Calu3 (cell line): ENCODE measurements at regions of chr1 and their contacts with region 1.

Region 1: DNA sequence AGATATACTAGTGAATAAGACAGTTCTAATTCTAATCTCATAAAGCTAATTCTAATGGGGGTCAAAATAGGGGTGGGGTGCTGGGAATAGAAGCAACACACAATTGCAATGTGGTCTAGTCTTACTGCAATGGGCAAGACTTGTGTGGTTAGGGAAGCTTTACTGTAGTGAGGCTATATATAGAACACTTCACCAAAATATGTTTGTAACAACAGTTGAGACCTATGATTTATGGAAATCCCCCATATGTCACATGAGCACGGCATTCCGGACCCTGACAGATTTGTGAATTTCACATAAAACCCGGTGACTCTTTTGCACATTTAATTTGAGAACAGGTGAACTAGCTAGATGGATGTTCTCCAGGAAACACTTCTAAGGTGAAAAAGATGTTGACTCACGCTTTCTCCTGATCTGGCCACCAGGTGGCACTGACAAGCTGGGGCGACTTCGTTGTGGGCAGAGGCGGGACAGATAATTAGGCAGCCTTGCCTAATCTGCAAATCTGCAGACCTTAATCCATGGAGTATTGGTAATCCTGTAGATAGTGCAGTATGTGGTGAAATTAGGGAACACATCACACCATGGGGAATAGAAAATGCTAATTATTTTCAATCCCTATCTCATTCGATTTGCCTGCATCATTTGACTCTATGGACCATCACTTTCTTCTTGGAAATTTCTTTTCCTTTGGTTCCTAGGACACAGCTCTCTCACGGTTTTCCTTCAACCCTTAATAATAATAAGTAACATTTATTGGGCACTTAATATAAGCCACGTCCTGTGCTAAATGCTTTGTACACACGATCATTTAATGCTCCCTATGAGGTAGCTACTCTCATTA is 37.7 kb downstream of the KIAA0040 start:
- DNase-seq: peak; percentile 85
- H3K4me3 Mint-ChIP-seq: no peak overlapping the region
- H3K27ac Mint-ChIP-seq: no peak overlapping the region
- H3K4me1 Mint-ChIP-seq: peaks cover 21% of the 10 kb centered on the region
- H3K27me3 Mint-ChIP-seq: peaks cover 45% of the 10 kb centered on the region
- CTCF ChIP-seq: peak; percentile 85

Region 2: GRCh38 chr1:175023043-175023921 is 131.6 kb before region 1 on chr1 and contains the start of gene MRPS14:
- CTCF ChIA-PET with region 1: interaction called, 6 read pairs
- intact Hi-C with region 1: loop called (anchors 2 kb)
- DNase-seq: peak; percentile 99
- H3K4me3 Mint-ChIP-seq: peak within 1 kb of the TSS; percentile 77
- H3K27ac Mint-ChIP-seq: peak within 1 kb of the TSS; percentile 63
- H3K4me1 Mint-ChIP-seq: peaks cover 15% of the 10 kb centered on the region
- H3K27me3 Mint-ChIP-seq: no peaks in the 10 kb centered on the region
- CTCF ChIP-seq: no peak
- total RNA-seq, gene MRPS14: 29.9 and 33.6 TPM in 2 replicates

Region 3: DNA sequence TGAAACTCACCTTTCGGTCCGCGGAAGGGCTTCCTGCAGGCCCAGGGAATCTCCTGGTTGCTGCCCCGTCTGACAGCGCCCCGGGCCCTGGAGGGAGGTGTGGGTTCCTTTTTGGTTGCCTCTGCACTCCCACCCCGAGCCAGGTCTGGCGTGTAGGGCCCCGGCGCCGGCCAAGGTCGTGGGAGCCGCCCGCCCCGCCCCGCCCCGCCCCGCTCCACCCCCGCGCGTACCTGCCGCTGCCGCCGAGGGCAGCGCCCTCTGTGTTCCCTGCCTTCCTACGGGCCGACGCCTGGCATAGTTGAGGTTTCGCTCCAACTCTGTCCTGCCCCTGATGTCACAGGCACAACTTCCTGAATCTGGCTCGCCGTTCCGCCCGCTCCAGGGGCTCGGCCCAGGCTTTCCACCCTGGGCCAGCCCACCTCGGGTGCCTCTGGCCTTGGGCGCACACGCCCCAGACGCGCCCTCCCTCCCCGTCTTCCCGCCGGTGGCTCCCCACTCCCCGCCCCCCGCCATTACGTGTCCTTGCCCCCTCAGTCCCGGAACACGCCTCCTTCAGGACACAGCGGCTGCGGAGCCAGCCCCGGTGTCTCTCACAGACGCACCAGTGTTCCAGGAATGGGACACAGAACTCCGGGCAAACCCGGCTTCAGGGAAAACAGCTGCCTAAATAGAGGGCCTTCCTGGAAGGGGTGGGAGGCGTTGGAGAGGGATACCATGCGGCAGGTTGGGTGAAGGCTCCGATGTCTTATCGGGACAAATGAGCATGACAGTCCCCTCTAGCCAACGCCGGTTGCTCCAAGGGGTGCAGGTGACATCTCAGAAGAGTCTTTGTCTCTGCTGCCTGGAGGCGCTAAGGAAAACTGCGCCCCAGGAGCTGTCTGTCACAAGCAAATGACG is 38.0 kb after region 1 on chr1 and contains the start of gene KIAA0040:
- CTCF ChIA-PET with region 1: interaction called, 14 read pairs
- intact Hi-C with region 1: loop called (anchors 1 kb)
- DNase-seq: peak; percentile 87
- H3K4me3 Mint-ChIP-seq: peak within 1 kb of the TSS; percentile 86
- H3K27ac Mint-ChIP-seq: peak within 1 kb of the TSS; percentile 89
- H3K4me1 Mint-ChIP-seq: peaks cover 49% of the 10 kb centered on the region
- H3K27me3 Mint-ChIP-seq: no peaks in the 10 kb centered on the region
- CTCF ChIP-seq: peak; percentile 13
- total RNA-seq, gene KIAA0040: 24.3 and 33.4 TPM in 2 replicates

Region 4: DNA sequence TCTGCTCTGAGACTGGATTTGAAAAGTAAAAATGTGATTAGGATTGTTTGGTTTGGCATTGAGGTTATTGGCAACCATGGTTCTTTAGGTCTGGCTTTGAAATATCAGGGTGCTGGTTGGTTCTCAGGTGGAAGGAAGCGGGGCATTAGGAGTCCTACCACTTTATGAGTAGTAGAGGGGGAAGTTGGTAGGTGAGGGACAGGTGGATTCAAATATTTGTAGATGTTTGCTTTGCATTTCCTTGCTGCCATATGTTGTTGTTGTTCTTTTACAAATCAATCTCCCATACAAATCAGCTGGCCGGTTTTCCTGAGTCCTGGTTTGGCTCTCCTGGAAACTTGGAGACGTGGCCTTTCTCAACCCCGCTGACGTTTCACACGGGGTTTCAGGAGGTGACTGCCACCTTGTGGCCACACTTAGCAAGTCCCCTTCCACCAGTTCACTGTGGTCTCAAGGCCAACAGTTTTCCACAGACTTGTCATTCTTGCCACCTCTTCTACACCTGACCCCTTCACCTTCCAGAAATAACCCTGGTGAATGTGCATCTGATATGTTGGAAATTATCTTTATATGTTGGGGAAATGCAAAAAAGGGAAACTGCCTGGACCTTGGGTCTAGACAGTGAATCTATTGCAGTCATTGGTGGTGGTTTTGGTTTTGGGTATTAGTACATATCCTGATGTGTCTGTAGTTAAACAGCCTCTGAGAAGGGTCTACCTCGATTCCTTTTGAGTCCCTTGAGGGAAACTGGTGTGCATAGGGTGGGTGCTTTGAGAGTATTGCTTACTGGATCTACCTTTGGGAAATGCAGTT is 164.8 kb after region 1 on chr1:
- CTCF ChIA-PET with region 1: interaction called, 90 read pairs
- intact Hi-C with region 1: loop called (anchors 1 kb)
- DNase-seq: peak; percentile 77
- H3K4me3 Mint-ChIP-seq: no peak overlapping the region
- H3K27ac Mint-ChIP-seq: no peak overlapping the region
- H3K4me1 Mint-ChIP-seq: peaks cover under 1% of the 10 kb centered on the region
- H3K27me3 Mint-ChIP-seq: peaks cover 30% of the 10 kb centered on the region
- CTCF ChIP-seq: peak; percentile 88

Region 5: GRCh38 chr1:175373786-175374623 is 219.2 kb after region 1 on chr1:
- CTCF ChIA-PET with region 1: interaction called, 14 read pairs
- intact Hi-C with region 1: no loop called
- DNase-seq: peak; percentile 56
- H3K4me3 Mint-ChIP-seq: no peak overlapping the region
- H3K27ac Mint-ChIP-seq: no peak overlapping the region
- H3K4me1 Mint-ChIP-seq: no peaks in the 10 kb centered on the region
- H3K27me3 Mint-ChIP-seq: peaks cover 98% of the 10 kb centered on the region
- CTCF ChIP-seq: peak; percentile 65

Region 6: DNA sequence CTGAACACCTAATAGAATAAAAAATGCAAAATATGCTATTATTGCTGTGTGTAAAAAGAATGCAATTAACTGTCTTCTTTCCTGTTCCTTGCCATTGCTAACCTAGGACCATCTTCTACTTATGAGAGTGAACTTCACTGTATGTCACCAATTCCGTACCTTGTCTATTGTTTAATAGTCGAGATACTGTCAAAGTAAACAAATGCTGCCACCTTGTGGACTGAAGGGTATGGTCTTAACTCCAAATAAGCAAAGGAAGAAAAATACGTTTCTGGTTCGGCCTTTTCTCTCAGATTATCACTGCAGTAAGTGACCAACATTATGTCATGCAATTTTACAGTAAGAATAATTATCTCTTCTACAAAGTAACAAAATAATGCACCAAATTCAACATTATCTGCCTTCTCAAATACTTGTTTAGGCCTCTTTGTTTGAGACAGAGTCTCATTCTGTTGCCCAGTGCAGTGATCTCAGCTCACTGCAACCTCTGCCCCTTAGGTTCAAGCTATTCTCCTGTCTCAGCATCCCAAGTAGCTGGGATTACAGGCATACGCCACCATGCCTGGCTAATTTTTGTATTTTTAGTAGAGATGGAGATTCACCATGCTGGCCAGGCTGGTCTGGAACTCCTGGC is 918.8 kb after region 1 on chr1:
- CTCF ChIA-PET with region 1: no interaction called
- intact Hi-C with region 1: loop called (anchors 5 kb)
- DNase-seq: peak; percentile 53
- H3K4me3 Mint-ChIP-seq: no peak overlapping the region
- H3K27ac Mint-ChIP-seq: no peak overlapping the region
- H3K4me1 Mint-ChIP-seq: no peaks in the 10 kb centered on the region
- H3K27me3 Mint-ChIP-seq: no peaks in the 10 kb centered on the region
- CTCF ChIP-seq: peak; percentile 63